Pancreas (tissue), 10 donors: ENCODE measurements at regions of chr11 and their contacts with region 1.

Region 1: GRCh38 chr11:78645226-78646202 is 70.8 kb upstream of the NARS2 start:
- DNase-seq: peak; percentile 47 to 91 (median 82)
- ATAC-seq: peak; percentile 90 to 98 (median 96)
- H3K4me3 ChIP-seq: no peak overlapping the region
- H3K27ac ChIP-seq: no peak overlapping the region
- H3K4me1 ChIP-seq: no peaks in the 10 kb centered on the region
- H3K27me3 ChIP-seq: no peaks in the 10 kb centered on the region
- CTCF ChIP-seq: peak; percentile 82 to 90 (median 87)

Region 2: DNA sequence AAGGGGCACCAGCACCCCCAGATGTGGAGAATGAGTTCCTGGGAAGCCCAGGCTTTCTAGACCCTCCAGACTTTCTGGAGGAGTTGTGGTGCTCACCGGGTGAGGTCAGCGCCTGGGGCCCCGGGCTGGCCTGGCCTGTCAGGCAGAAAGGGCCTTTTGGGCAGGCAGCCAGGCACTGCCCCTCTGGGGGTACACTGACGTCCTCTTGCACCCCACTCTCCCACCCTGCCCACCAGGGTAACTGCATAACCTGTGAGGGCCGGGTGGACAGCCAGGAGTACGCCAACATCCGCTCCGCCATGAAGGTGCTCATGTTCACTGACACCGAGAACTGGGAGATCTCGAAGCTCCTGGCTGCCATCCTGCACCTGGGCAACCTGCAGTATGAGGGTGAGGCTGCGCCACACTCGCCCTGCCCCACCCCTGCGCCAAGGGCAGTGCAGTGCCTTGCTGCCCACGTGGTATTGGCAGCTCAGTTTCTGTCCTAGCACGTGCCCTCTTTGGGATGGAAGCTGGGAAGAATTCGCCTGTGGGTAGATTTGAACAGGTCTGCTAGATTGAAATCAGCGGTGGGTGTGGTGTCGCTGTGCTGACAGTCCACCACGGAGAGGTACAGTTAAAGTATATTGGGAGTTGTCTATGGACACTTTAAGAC is 1487.3 kb before region 1 on chr11:
- intact Hi-C with region 1: no loop called
- DNase-seq: peak in 1 of 6 donors; percentile 63
- ATAC-seq: no peak
- H3K4me3 ChIP-seq: no peak overlapping the region
- H3K27ac ChIP-seq: no peak overlapping the region
- H3K4me1 ChIP-seq: no peaks in the 10 kb centered on the region
- H3K27me3 ChIP-seq: no peaks in the 10 kb centered on the region
- CTCF ChIP-seq: no peak

Region 3: GRCh38 chr11:79026803-79027445 is 381.4 kb after region 1 on chr11:
- intact Hi-C with region 1: no loop called
- DNase-seq: no peak
- ATAC-seq: no peak
- H3K4me3 ChIP-seq: no peak overlapping the region
- H3K27ac ChIP-seq: no peak overlapping the region
- H3K4me1 ChIP-seq: no peaks in the 10 kb centered on the region
- H3K27me3 ChIP-seq: no peaks in the 10 kb centered on the region
- CTCF ChIP-seq: no peak

Region 4: GRCh38 chr11:79076526-79077115 is 431.1 kb after region 1 on chr11:
- intact Hi-C with region 1: loop called in 2 of 3 experiments (anchors 5 to 10 kb)
- DNase-seq: peak in 3 of 6 donors; percentile 25 to 73 (median 50)
- ATAC-seq: peak; percentile 43 to 74 (median 52)
- H3K4me3 ChIP-seq: no peak overlapping the region
- H3K27ac ChIP-seq: no peak overlapping the region
- H3K4me1 ChIP-seq: no peaks in the 10 kb centered on the region
- H3K27me3 ChIP-seq: no peaks in the 10 kb centered on the region
- CTCF ChIP-seq: peak; percentile 6 to 48 (median 44)

Region 5: GRCh38 chr11:79087238-79087960 is 441.9 kb after region 1 on chr11:
- intact Hi-C with region 1: loop called in 1 of 3 experiments (anchors 10 kb)
- DNase-seq: peak in 1 of 6 donors; percentile 35
- ATAC-seq: peak; percentile 10 to 76 (median 70)
- H3K4me3 ChIP-seq: no peak overlapping the region
- H3K27ac ChIP-seq: peak overlapping the region; percentile 42 to 75 (median 61)
- H3K4me1 ChIP-seq: no peaks in the 10 kb centered on the region
- H3K27me3 ChIP-seq: no peaks in the 10 kb centered on the region
- CTCF ChIP-seq: no peak

Region 6: GRCh38 chr11:79493555-79494171 is 848.1 kb after region 1 on chr11:
- intact Hi-C with region 1: loop called in 1 of 3 experiments (anchors 10 kb)
- DNase-seq: peak; percentile 43 to 87 (median 72)
- ATAC-seq: peak; percentile 35 to 91 (median 86)
- H3K4me3 ChIP-seq: no peak overlapping the region
- H3K27ac ChIP-seq: no peak overlapping the region
- H3K4me1 ChIP-seq: no peaks in the 10 kb centered on the region
- H3K27me3 ChIP-seq: no peaks in the 10 kb centered on the region
- CTCF ChIP-seq: peak; percentile 79 to 92 (median 86)